Activated B cell treated with CpG ODN at 0.5 μM for 24 hours (primary cell): ENCODE measurements at regions of chr16 and their contacts with region 1.

Region 1: GRCh38 chr16:10385725-10386516 is at the start of gene ATF7IP2:
- DNase-seq: peak; percentile 86
- ATAC-seq: peak; percentile 99
- H3K4me3 Mint-ChIP-seq: peak within 1 kb of the TSS; percentile 99
- H3K27ac Mint-ChIP-seq: peak within 1 kb of the TSS; percentile 96
- H3K4me1 Mint-ChIP-seq: peaks cover 49% of the 10 kb centered on the region
- H3K27me3 Mint-ChIP-seq: no peaks in the 10 kb centered on the region
- CTCF ChIP-seq: no peak
- total RNA-seq, gene ATF7IP2: 48.6 and 55.9 TPM in 2 replicates

Region 2: DNA sequence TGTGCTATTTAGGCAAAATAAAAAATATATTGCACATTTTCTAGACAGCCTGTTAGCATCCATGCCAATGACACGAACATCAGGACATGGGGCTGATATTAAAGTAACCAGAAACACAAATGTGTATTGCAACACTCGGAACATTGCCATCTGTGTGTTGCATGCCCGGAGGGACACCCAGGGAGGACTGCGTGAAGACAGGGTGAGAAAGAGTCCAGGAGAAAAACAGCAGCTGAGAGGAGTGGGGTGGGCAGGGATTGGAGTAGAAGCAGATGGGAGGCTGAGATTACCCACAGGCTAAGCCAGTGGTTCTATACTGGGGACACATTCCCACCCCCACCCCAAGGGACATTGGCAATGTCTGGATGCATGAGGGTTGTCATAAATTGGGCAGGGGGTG is 318.5 kb before region 1 on chr16:
- CTCF ChIA-PET with region 1: no interaction called
- POLR2A ChIA-PET with region 1: no interaction called
- intact Hi-C with region 1: no loop called
- DNase-seq: no peak
- ATAC-seq: no peak
- H3K4me3 Mint-ChIP-seq: no peak overlapping the region
- H3K27ac Mint-ChIP-seq: no peak overlapping the region
- H3K4me1 Mint-ChIP-seq: no peaks in the 10 kb centered on the region
- H3K27me3 Mint-ChIP-seq: peaks cover 11% of the 10 kb centered on the region
- CTCF ChIP-seq: no peak

Region 3: GRCh38 chr16:10256784-10257641 is 128.9 kb before region 1 on chr16:
- CTCF ChIA-PET with region 1: interaction called, 5 read pairs
- POLR2A ChIA-PET with region 1: interaction called, 5 read pairs
- intact Hi-C with region 1: loop called (anchors 10 kb)
- DNase-seq: peak; percentile 56
- ATAC-seq: peak; percentile 83
- H3K4me3 Mint-ChIP-seq: peak overlapping the region; percentile 71
- H3K27ac Mint-ChIP-seq: peak overlapping the region; percentile 47
- H3K4me1 Mint-ChIP-seq: peaks cover 42% of the 10 kb centered on the region
- H3K27me3 Mint-ChIP-seq: no peaks in the 10 kb centered on the region
- CTCF ChIP-seq: no peak

Region 4: DNA sequence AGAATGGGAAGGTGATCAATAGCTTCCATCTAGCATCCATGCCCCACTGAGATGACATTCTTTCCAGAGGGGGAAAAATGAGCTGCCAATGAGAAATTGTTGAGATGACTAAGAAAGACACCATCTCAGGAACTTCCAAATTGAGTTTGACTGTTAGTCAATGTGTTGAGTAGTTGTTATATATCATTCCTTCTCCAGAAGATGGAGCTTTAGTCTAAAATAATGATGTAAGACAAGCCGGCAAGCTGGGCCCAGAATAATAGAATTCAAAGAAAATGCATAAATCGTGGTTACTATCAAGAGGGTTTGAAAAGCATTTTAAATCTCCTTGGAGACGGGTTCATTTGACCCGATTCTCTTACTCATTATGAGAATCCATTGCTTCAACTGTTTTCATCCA is 71.1 kb before region 1 on chr16:
- CTCF ChIA-PET with region 1: no interaction called
- POLR2A ChIA-PET with region 1: interaction called, 8 read pairs
- intact Hi-C with region 1: loop called (anchors 5 kb)
- DNase-seq: no peak
- ATAC-seq: no peak
- H3K4me3 Mint-ChIP-seq: no peak overlapping the region
- H3K27ac Mint-ChIP-seq: peak overlapping the region; percentile 63
- H3K4me1 Mint-ChIP-seq: peaks cover 22% of the 10 kb centered on the region
- H3K27me3 Mint-ChIP-seq: no peaks in the 10 kb centered on the region
- CTCF ChIP-seq: no peak

Region 5: DNA sequence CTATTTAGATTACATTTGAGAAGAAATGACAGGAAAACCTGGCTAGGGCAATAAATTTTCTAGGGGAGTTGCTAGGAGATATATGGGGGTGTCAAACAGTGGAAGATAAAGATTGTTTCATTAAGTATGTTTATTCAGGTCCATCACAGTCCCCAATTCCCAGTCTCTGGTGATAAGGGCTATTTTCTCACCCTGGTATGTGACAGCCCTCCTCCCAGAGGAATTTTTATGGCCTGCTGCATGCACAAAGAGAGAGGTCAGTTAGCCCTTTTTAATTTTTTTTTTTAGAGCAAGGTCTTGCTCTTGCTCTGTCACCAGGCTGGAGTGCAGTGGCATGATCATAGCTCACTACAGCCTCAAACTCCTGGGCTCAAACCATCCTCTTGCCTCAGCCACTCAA is 53.7 kb before region 1 on chr16:
- CTCF ChIA-PET with region 1: no interaction called
- POLR2A ChIA-PET with region 1: interaction called, 10 read pairs
- intact Hi-C with region 1: no loop called
- DNase-seq: no peak
- ATAC-seq: no peak
- H3K4me3 Mint-ChIP-seq: no peak overlapping the region
- H3K27ac Mint-ChIP-seq: peak overlapping the region; percentile 46
- H3K4me1 Mint-ChIP-seq: peaks cover 40% of the 10 kb centered on the region
- H3K27me3 Mint-ChIP-seq: no peaks in the 10 kb centered on the region
- CTCF ChIP-seq: no peak

Region 6: DNA sequence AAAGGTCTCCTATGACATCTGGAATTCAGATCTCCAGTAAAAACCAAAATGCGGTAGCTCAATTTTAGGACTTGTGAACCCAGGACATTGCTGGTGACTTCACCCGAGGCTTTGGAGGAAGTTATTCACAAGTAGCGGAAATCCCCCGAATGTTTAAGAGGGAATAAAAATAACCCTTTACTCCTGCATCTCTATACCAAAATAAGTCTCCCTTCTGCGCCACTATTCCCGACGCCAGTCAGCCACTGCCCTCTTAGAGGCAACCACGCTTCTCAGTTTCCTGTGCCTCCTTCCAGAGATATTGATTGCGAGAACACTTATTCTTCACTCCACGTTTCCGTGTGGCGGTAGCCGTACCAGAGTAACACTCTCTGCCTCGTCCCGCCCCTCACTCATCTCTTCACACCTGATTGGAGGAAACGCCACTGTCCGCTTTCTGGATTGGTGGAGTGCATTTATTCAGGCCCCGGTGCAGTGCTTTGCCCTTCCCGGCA is 167.1 kb after region 1 on chr16:
- CTCF ChIA-PET with region 1: no interaction called
- POLR2A ChIA-PET with region 1: no interaction called
- intact Hi-C with region 1: no loop called
- DNase-seq: peak; percentile 69
- ATAC-seq: peak; percentile 97
- H3K4me3 Mint-ChIP-seq: peak overlapping the region; percentile 96
- H3K27ac Mint-ChIP-seq: peak overlapping the region; percentile 98
- H3K4me1 Mint-ChIP-seq: peaks cover 28% of the 10 kb centered on the region
- H3K27me3 Mint-ChIP-seq: no peaks in the 10 kb centered on the region
- CTCF ChIP-seq: no peak